ENCODE measurements at regions of chr11 and their contacts with region 1.

Region 1: GRCh38 chr11:93543292-93543977 is at the start of gene SMCO4:
- DNase-seq: peak; percentile 94
- H3K4me3 ChIP-seq: peak within 1 kb of the TSS; percentile 63 to 91 (median 72)
- H3K27ac ChIP-seq: peak within 1 kb of the TSS; percentile 53 to 95 (median 91)
- H3K4me1 ChIP-seq: peaks cover 0 to 58% (median 40%) of the 10 kb centered on the region in 6 donors
- H3K27me3 ChIP-seq: peaks cover 0 to 15% (median 0%) of the 10 kb centered on the region in 7 donors
- CTCF ChIP-seq: peak; percentile 31 to 83 (median 74)
- POLR2A ChIP-seq: no peak
- total RNA-seq, gene SMCO4: 48.1 to 74.1 (median 52.8) TPM

Region 2: DNA sequence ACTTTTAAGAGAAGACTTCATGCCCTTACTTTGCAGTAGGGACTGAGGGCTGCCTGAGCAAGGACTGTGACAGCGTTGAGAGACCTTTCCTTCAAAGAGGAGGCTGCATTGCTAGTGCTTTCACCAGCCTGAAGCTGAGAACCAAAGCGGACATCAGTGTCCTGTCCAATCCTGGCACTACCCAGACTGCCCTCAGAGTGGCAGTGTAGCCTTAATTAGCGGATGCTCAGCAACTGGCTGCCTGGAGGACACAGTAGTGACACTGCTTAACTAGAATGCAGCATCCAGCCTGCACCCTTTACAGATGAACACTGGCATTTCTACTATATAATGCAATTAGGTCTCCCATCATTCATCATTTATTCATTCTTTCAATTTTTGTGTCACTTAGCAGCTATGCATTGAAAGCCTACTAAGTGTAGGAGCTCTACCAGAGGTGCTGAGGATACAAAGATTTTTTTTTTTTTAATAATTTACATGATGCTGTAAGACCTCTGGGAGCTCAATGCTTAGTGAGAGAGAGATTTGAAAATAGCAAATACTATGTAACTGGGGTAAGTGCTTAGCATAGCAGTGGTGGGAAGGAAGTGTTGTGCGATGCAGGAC is 308.7 kb before region 1 on chr11:
- intact Hi-C with region 1: loop called (anchors 5 kb)
- DNase-seq: peak; percentile 85
- H3K4me3 ChIP-seq: no peak overlapping the region
- H3K27ac ChIP-seq: no peak overlapping the region
- H3K4me1 ChIP-seq: peaks cover 0 to 4% (median 0%) of the 10 kb centered on the region in 6 donors
- H3K27me3 ChIP-seq: peaks cover 0 to 6% (median 0%) of the 10 kb centered on the region in 7 donors
- CTCF ChIP-seq: peak; percentile 71 to 93 (median 86)
- POLR2A ChIP-seq: no peak

Measured in spleen (tissue), 13 donors.